Naive thymus-derived CD4-positive, alpha-beta T cell (primary cell): ENCODE measurements at regions of chr10 and their contacts with region 1.

Region 1: GRCh38 chr10:110225756-110226542 is 18.5 kb downstream of the MXI1 start:
- DNase-seq: peak; percentile 83 to 91 (median 88)
- ATAC-seq: peak; percentile 73
- H3K4me3 ChIP-seq: peak overlapping the region; percentile 75
- H3K4me3 Mint-ChIP-seq: peak overlapping the region; percentile 87 to 99 (median 94)
- H3K27ac ChIP-seq: peak overlapping the region; percentile 92
- H3K27ac Mint-ChIP-seq: peak overlapping the region; percentile 78 to 97 (median 96)
- H3K4me1 ChIP-seq: peaks cover 16 to 27% of the 10 kb centered on the region in 2 donors
- H3K4me1 Mint-ChIP-seq: peaks cover 27 to 68% (median 49%) of the 10 kb centered on the region in 7 donors
- H3K27me3 ChIP-seq: no peaks in the 10 kb centered on the region
- H3K27me3 Mint-ChIP-seq: no peaks in the 10 kb centered on the region

Region 2: GRCh38 chr10:110067960-110068770 is 157.8 kb before region 1 on chr10:
- CTCF ChIA-PET with region 1: no interaction called
- POLR2A ChIA-PET with region 1: no interaction called
- intact Hi-C with region 1: loop called in 1 of 2 experiments (anchors 5 kb)
- DNase-seq: peak in 7 of 9 donors; percentile 40 to 69 (median 52)
- ATAC-seq: peak; percentile 92
- H3K4me3 ChIP-seq: peak overlapping the region; percentile 18
- H3K4me3 Mint-ChIP-seq: peak overlapping the region; percentile 39 to 91 (median 78)
- H3K27ac ChIP-seq: peak overlapping the region; percentile 57
- H3K27ac Mint-ChIP-seq: peak overlapping the region; percentile 83 to 96 (median 92)
- H3K4me1 ChIP-seq: peaks cover 76 to 84% of the 10 kb centered on the region in 2 donors
- H3K4me1 Mint-ChIP-seq: peaks cover 65 to 100% (median 95%) of the 10 kb centered on the region in 7 donors
- H3K27me3 ChIP-seq: no peaks in the 10 kb centered on the region
- H3K27me3 Mint-ChIP-seq: no peaks in the 10 kb centered on the region

Region 3: GRCh38 chr10:110137142-110137545 is 88.8 kb before region 1 on chr10:
- CTCF ChIA-PET with region 1: interaction called, 21 read pairs
- POLR2A ChIA-PET with region 1: interaction called, 3 read pairs
- intact Hi-C with region 1: loop called (anchors 1 kb)
- DNase-seq: peak in 7 of 9 donors; percentile 48 to 67 (median 64)
- ATAC-seq: peak; percentile 85
- H3K4me3 ChIP-seq: no peak overlapping the region
- H3K4me3 Mint-ChIP-seq: peak overlapping the region in 1 of 10 donors; percentile 19
- H3K27ac ChIP-seq: peak overlapping the region; percentile 4
- H3K27ac Mint-ChIP-seq: peak overlapping the region; percentile 2 to 83 (median 45)
- H3K4me1 ChIP-seq: peaks cover 14% of the 10 kb centered on the region in 2 donors
- H3K4me1 Mint-ChIP-seq: peaks cover 13 to 38% (median 29%) of the 10 kb centered on the region in 7 donors
- H3K27me3 ChIP-seq: no peaks in the 10 kb centered on the region
- H3K27me3 Mint-ChIP-seq: no peaks in the 10 kb centered on the region

Region 4: DNA sequence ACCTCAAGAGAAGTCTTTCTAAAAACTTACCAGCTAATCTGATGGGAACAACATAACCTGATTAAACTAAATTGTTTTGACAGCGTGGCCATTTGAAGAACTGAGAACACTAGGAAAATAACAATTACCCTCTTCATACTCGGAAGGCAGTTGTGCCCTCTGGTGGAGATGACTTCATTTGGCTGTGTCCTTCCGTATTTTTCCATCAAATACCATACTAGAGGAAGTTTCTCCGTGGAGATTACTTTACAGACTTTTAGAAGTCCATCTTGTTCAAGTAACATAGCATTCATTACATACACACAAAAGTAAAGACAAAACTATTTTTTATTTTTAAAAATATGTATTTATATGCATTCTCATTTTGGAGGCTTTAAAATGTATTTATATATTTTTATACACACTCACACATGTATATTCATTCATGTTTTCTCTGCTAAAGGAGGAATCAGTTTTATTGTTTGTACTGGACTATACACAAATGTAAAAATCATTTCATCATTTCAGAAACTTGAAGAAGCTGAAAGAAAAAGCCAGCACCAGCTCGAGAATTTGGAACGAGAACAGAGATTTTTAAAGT is 53.5 kb after region 1 on chr10:
- CTCF ChIA-PET with region 1: interaction called, 3 read pairs
- POLR2A ChIA-PET with region 1: interaction called, 5 read pairs
- intact Hi-C with region 1: loop called (anchors 1 kb)
- DNase-seq: peak in 7 of 9 donors; percentile 37 to 61 (median 56)
- ATAC-seq: peak; percentile 82
- H3K4me3 ChIP-seq: no peak overlapping the region
- H3K4me3 Mint-ChIP-seq: peak overlapping the region in 5 of 10 donors; percentile 4 to 52 (median 48)
- H3K27ac ChIP-seq: no peak overlapping the region
- H3K27ac Mint-ChIP-seq: peak overlapping the region in 3 of 9 donors; percentile 8 to 59 (median 48)
- H3K4me1 ChIP-seq: peaks cover 0 to 6% of the 10 kb centered on the region in 2 donors
- H3K4me1 Mint-ChIP-seq: peaks cover 14 to 42% (median 21%) of the 10 kb centered on the region in 7 donors
- H3K27me3 ChIP-seq: no peaks in the 10 kb centered on the region
- H3K27me3 Mint-ChIP-seq: peaks cover 0 to 22% (median 0%) of the 10 kb centered on the region in 5 donors